B cell (primary cell): ENCODE measurements at regions of chr5 and their contacts with region 1.

Region 1: DNA sequence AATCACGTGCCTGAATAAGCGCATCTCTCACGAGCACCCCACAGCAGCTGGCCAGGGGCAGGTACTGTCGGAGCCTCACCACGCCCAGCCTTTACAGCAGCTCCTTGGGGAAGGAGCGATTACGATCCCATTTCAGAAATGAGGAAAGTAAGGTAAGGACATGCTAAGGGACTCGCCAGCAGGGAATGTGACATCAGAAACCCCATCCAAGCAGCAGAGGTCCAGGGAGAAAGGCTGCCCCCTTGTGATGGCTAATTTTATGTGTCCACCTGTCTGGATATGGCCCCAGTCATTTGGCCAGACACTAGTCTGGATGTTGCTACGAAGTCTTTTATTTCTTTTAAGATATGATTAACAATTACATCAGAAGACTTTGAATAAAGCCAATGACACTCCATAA is 77.3 kb downstream of the UBE2QL1 start:
- DNase-seq: peak; percentile 13
- ATAC-seq: no peak
- H3K4me3 ChIP-seq: no peak overlapping the region
- H3K4me3 Mint-ChIP-seq: no peak overlapping the region
- H3K27ac ChIP-seq: no peak overlapping the region
- H3K27ac Mint-ChIP-seq: no peak overlapping the region
- H3K4me1 ChIP-seq: no peaks in the 10 kb centered on the region
- H3K4me1 Mint-ChIP-seq: no peaks in the 10 kb centered on the region
- H3K27me3 ChIP-seq: peaks cover 0 to 3% (median 0%) of the 10 kb centered on the region in 4 experiments
- H3K27me3 Mint-ChIP-seq: peaks cover 16% of the 10 kb centered on the region
- CTCF ChIP-seq: no peak

Region 2: GRCh38 chr5:6291961-6292360 is 233.9 kb before region 1 on chr5:
- CTCF ChIA-PET with region 1: interaction called, 3 read pairs
- POLR2A ChIA-PET with region 1: no interaction called
- intact Hi-C with region 1: loop called (anchors 5 kb)
- DNase-seq: peak; percentile 19
- ATAC-seq: peak; percentile 28
- H3K4me3 ChIP-seq: no peak overlapping the region
- H3K4me3 Mint-ChIP-seq: no peak overlapping the region
- H3K27ac ChIP-seq: no peak overlapping the region
- H3K27ac Mint-ChIP-seq: no peak overlapping the region
- H3K4me1 ChIP-seq: no peaks in the 10 kb centered on the region
- H3K4me1 Mint-ChIP-seq: no peaks in the 10 kb centered on the region
- H3K27me3 ChIP-seq: no peaks in the 10 kb centered on the region
- H3K27me3 Mint-ChIP-seq: no peaks in the 10 kb centered on the region
- CTCF ChIP-seq: no peak

Region 3: DNA sequence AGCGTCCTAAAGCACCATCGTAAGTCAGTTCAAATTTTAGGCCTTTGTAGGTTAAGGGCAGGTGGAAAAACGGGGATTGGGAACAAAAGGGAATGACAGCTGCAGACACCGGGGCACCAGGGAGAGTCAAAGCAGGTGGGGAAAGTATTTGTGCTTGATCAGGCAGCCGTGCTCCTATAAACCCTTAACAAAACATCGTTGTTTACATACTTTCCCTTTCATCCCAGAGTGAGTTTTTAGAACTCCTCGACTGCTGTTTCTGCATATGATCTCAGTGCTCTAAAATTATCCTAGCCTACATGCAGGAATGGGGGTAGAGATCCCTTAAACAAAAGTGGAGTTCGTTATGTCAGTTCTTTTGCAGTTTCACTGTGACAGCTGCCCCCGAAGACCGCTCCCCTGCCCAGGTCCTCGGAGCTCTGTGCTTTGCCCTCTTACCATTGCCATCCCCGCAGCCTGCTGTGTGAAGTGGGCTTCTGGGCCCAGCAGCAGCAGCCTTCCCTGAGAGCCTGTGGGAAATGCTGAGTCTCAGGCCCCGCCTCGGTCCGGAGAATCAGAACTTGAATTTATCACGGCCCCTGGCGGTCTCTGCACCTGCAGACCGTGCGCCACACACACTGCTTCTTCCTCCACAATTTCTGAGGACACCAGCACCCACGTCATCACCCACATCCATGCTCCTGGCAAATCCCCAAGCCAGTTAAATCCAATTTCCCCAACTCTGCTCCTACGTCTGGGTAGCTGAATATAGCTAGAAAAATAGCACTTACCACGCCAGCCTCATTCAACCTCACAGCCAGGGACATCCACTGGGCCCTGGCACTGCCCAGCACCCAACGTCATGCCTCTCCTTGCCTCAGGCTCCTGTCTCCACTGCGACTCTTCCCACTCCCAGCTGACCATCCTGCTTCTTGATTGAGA is 20.1 kb after region 1 on chr5:
- CTCF ChIA-PET with region 1: no interaction called
- POLR2A ChIA-PET with region 1: no interaction called
- intact Hi-C with region 1: no loop called
- DNase-seq: no peak
- ATAC-seq: no peak
- H3K4me3 ChIP-seq: no peak overlapping the region
- H3K4me3 Mint-ChIP-seq: no peak overlapping the region
- H3K27ac ChIP-seq: no peak overlapping the region
- H3K27ac Mint-ChIP-seq: no peak overlapping the region
- H3K4me1 ChIP-seq: no peaks in the 10 kb centered on the region
- H3K4me1 Mint-ChIP-seq: no peaks in the 10 kb centered on the region
- H3K27me3 ChIP-seq: no peaks in the 10 kb centered on the region
- H3K27me3 Mint-ChIP-seq: no peaks in the 10 kb centered on the region
- CTCF ChIP-seq: no peak